PC-9 (cell line): ENCODE measurements at regions of chr1 and their contacts with region 1.

Region 1: DNA sequence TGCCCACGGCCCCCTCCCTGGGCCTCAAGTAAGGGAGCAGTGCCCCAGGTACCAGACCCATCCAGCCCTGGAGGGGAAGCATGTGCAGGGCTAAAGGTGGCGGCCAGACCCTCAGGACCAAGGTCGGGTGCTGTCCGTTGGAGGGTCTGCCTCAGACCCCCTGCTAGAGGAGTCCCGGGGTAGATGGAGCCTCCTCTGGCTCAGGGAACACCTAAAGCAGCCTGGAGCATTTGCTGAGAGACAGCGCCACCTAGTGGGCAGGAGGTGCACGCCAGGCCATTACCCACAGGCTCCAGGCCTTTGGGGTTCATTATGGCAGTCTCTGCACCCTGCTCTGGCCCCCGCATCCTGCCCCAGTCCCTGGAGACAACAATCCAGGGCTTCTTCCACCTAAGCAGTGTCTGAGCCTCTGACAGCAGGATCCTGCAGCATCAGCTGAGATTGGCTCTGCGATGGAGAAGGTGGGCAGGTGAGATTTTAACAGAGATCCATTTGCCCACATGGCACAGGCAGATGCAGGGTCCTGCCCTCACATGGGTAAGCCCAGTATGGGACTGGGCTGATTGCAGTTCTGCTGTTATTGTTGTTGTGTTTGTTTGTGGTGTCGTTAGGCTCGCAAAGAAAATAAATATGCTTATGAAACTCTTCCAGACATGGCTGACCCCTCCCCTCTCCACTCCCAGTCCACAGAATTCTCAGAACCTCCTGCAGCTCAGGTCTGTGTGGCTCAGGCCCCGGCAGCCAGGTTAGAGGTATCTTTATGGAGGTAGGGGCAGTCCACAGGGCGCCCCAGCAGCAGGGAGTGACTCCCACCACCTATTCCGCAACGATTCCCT is 42.4 kb downstream of the CTNNBIP1 start:
- DNase-seq: peak in 1 of 2 experiments; percentile 72
- H3K4me3 ChIP-seq: no peak overlapping the region
- H3K27ac ChIP-seq: no peak overlapping the region
- H3K4me1 ChIP-seq: no peaks in the 10 kb centered on the region
- H3K27me3 ChIP-seq: no peaks in the 10 kb centered on the region
- CTCF ChIP-seq: peak; percentile 88

Region 2: GRCh38 chr1:9145021-9145668 is 722.5 kb before region 1 on chr1:
- CTCF ChIA-PET with region 1: no interaction called
- POLR2A ChIA-PET with region 1: no interaction called
- intact Hi-C with region 1: no loop called
- DNase-seq: peak; percentile 44 to 51
- H3K4me3 ChIP-seq: no peak overlapping the region
- H3K27ac ChIP-seq: peak overlapping the region; percentile 39; the same call in 1 of the 2 replicates
- H3K4me1 ChIP-seq: peaks cover 4% of the 10 kb centered on the region; the same call in 1 of the 2 replicates
- H3K27me3 ChIP-seq: no peaks in the 10 kb centered on the region
- CTCF ChIP-seq: no peak

Region 3: GRCh38 chr1:9588551-9589143 is 279.0 kb before region 1 on chr1 and contains the start of gene TMEM201:
- CTCF ChIA-PET with region 1: no interaction called
- POLR2A ChIA-PET with region 1: no interaction called
- intact Hi-C with region 1: loop called (anchors 5 kb)
- DNase-seq: peak; percentile 62 to 93
- H3K4me3 ChIP-seq: peak within 1 kb of the TSS; percentile 78
- H3K27ac ChIP-seq: no peak within 1 kb of the TSS
- H3K4me1 ChIP-seq: no peaks in the 10 kb centered on the region
- H3K27me3 ChIP-seq: no peaks in the 10 kb centered on the region
- CTCF ChIP-seq: no peak
- total RNA-seq, gene TMEM201: 17.2 and 17.4 TPM in 2 replicates

Region 4: GRCh38 chr1:9629445-9630201 is 238.0 kb before region 1 on chr1:
- CTCF ChIA-PET with region 1: no interaction called
- POLR2A ChIA-PET with region 1: interaction called, 6 read pairs
- intact Hi-C with region 1: loop called (anchors 2 kb)
- DNase-seq: no peak
- H3K4me3 ChIP-seq: no peak overlapping the region
- H3K27ac ChIP-seq: no peak overlapping the region
- H3K4me1 ChIP-seq: no peaks in the 10 kb centered on the region; the same call in 1 of the 2 replicates
- H3K27me3 ChIP-seq: no peaks in the 10 kb centered on the region
- CTCF ChIP-seq: no peak

Region 5: GRCh38 chr1:9724706-9725476 is 142.7 kb before region 1 on chr1:
- CTCF ChIA-PET with region 1: no interaction called
- POLR2A ChIA-PET with region 1: no interaction called
- intact Hi-C with region 1: loop called (anchors 1 kb)
- DNase-seq: peak in 1 of 2 experiments; percentile 65
- H3K4me3 ChIP-seq: no peak overlapping the region
- H3K27ac ChIP-seq: no peak overlapping the region
- H3K4me1 ChIP-seq: no peaks in the 10 kb centered on the region
- H3K27me3 ChIP-seq: no peaks in the 10 kb centered on the region
- CTCF ChIP-seq: peak; percentile 84

Region 6: DNA sequence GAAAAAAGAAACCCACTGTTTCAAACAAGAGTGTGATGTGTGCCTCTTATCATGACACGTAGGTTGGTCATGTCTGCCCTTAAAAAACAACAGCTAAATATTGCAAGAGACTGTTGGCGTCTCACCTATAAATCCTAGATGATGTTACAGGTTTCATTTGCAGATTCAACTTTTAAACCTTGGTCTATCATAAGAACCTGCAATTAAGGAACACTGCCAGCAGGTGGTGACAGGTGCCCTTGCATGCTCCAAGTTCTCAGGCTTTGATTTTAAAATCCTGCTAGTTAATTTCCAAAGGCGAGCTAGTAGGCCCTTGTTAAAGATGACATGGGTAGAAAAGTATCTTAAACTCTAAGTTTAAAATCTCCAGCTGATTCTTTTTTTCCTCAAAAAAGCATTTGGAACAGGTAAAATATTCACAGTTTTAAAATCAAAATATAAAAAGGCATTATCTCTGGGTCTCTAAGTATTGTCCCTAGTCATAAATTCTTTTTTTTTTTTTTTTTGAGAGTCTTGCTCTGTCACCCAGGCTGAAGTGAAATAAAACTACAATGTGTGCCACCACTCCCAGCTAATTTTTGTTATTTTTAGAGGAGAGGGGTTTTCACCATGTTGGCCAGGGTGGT is 83.0 kb before region 1 on chr1:
- CTCF ChIA-PET with region 1: no interaction called
- POLR2A ChIA-PET with region 1: no interaction called
- intact Hi-C with region 1: loop called (anchors 1 kb)
- DNase-seq: peak; percentile 37 to 39
- H3K4me3 ChIP-seq: no peak overlapping the region
- H3K27ac ChIP-seq: no peak overlapping the region
- H3K4me1 ChIP-seq: no peaks in the 10 kb centered on the region
- H3K27me3 ChIP-seq: no peaks in the 10 kb centered on the region
- CTCF ChIP-seq: peak; percentile 80

Region 7: DNA sequence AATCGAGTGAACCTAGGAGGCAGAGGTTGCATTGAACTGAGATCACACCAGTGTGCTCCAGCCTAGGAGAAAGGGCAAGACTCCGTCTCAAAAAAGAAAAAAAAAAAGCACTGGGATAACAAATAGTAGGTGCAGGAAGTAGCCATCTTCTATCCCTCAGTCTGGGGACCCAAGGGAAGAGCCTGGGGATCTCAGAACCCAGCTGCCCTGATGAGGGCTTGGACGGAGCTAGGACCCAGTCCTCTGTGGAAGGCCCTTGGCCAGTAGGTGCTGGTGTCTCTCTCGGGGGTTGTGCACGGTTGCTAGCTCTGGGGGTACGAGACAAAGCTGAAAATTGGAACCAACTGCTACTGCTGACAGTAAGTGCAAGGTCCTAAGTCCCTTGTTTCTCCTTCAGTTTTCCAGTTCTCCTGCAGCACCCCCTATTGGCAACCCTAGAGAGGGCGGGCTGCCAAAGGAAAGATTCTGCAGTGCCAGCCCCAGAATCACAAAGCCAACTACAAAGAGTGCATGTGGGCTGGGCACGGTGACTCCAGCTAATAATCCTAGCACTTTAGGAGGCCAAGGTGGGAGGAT is 285.2 kb after region 1 on chr1:
- CTCF ChIA-PET with region 1: no interaction called
- POLR2A ChIA-PET with region 1: interaction called, 18 read pairs
- intact Hi-C with region 1: no loop called
- DNase-seq: peak in 1 of 2 experiments; percentile 32
- H3K4me3 ChIP-seq: no peak overlapping the region
- H3K27ac ChIP-seq: no peak overlapping the region
- H3K4me1 ChIP-seq: no peaks in the 10 kb centered on the region
- H3K27me3 ChIP-seq: no peaks in the 10 kb centered on the region
- CTCF ChIP-seq: peak; percentile 63